Activated T-helper 1 cell treated with anti-CD3 and anti-CD28 coated beads, Interleukin-12 subunit alpha, Interleukin-12 subunit beta, Interleukin-2, Interleukin-4 antibody, amounts not matched to agents 30 ng/mL and 10 ng/mL and 1 ng/mL, durations not matched to agents 14 hours and 24 hours and 36 hours (primary cell): ENCODE measurements at regions of chr11 and their contacts with region 1.

Region 1: GRCh38 chr11:68447015-68447801 is 13.3 kb upstream of the PPP6R3 start:
- DNase-seq: peak; percentile 64
- H3K4me3 Mint-ChIP-seq: no peak overlapping the region
- H3K27ac Mint-ChIP-seq: no peak overlapping the region
- H3K4me1 Mint-ChIP-seq: peaks cover 9% of the 10 kb centered on the region
- H3K27me3 Mint-ChIP-seq: no peaks in the 10 kb centered on the region

Region 2: GRCh38 chr11:68297812-68298658 is 149.2 kb before region 1 on chr11:
- intact Hi-C with region 1: loop called (anchors 2 kb)
- DNase-seq: peak; percentile 60
- H3K4me3 Mint-ChIP-seq: no peak overlapping the region
- H3K27ac Mint-ChIP-seq: no peak overlapping the region
- H3K4me1 Mint-ChIP-seq: no peaks in the 10 kb centered on the region
- H3K27me3 Mint-ChIP-seq: peaks cover 8% of the 10 kb centered on the region

Region 3: DNA sequence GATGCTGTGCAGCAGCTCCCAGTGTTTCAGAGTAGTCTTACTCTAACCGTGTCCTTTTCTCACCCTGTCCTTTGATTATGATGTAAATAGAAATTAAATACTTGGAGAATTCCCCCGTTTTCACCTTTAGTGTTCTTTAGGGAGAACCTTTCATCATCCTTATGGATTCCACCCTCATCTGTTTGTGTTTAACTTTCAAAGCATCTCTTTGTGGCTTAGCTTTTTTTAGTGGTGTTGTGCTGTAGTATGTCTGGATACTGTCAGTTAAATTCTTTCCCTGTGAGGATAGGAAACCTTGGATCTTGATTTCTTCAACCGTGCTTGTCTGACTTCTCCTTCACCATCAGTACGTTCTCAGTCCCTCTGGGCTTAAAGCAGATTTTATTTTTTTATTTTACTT is 61.9 kb after region 1 on chr11:
- intact Hi-C with region 1: no loop called
- DNase-seq: no peak
- H3K4me3 Mint-ChIP-seq: no peak overlapping the region
- H3K27ac Mint-ChIP-seq: peak overlapping the region; percentile 13
- H3K4me1 Mint-ChIP-seq: peaks cover 45% of the 10 kb centered on the region
- H3K27me3 Mint-ChIP-seq: no peaks in the 10 kb centered on the region